Gastrocnemius medialis (tissue), 4 donors: ENCODE measurements at regions of chr17 and their contacts with region 1.

Region 1: GRCh38 chr17:48724251-48725003 is 1.4 kb downstream of the PRAC2 start:
- DNase-seq: peak; percentile 43 to 52
- ATAC-seq: peak; percentile 66 to 78
- H3K4me3 ChIP-seq: peak overlapping the region in 1 of 4 donors; percentile 13
- H3K27ac ChIP-seq: no peak overlapping the region
- H3K4me1 ChIP-seq: peaks cover 11 to 26% of the 10 kb centered on the region in 2 donors
- H3K27me3 ChIP-seq: peaks cover 99 to 100% (median 100%) of the 10 kb centered on the region in 3 donors
- CTCF ChIP-seq: peak; percentile 31 to 72 (median 44)
- POLR2A ChIP-seq: no peak

Region 2: DNA sequence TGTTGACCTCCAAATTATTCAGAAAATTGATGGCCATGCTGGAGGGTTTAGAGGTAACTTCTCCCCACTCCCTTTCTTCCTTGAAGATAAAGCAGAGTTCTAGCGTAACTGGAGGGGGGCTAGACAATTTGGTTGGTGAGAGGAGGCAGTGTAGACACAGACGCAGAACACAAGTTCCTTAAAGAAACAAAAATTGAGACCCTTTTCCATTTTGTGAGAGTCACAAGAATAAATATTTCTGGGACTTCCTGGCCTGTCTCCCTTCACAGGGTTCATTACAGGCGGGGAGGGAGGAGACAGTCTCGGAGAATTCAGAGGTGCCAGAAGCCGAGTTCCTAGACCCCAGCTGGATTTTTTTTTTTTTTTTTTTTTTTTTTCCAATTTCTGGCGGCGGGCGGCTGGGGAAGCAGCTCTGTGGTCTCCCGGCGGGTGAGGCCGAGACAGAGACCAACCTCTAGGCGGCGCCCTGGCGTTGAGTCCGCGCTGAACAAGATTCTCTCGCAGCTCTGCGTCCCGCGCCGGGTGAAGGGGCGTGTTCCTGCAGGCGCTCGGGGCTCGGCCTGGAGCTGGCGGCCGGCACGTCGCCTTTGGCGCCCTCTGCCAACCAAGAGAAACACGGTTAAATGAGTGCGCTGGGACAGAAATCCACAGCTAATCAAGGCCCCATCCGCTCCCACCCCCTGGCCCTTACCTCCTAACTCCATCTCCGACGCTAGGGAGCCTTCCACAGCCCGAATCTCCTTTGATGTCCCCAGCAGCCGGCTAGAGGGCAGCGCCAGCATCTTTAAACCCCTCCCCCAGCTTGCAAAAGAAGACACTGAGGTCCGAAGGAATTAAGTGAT is 88.0 kb before region 1 on chr17:
- in situ Hi-C with region 1: loop called in 1 of 4 experiments (anchors 25 kb)
- intact Hi-C with region 1: no loop called
- DNase-seq: peak in 1 of 2 donors; percentile 14
- ATAC-seq: peak in 1 of 2 donors; percentile 27
- H3K4me3 ChIP-seq: no peak overlapping the region
- H3K27ac ChIP-seq: no peak overlapping the region
- H3K4me1 ChIP-seq: no peaks in the 10 kb centered on the region
- H3K27me3 ChIP-seq: peaks cover 91 to 100% (median 100%) of the 10 kb centered on the region in 3 donors
- CTCF ChIP-seq: peak in 3 of 5 experiments; percentile 11 to 51 (median 39)
- POLR2A ChIP-seq: no peak

Region 3: GRCh38 chr17:48791128-48792032 is 67.0 kb after region 1 on chr17:
- in situ Hi-C with region 1: no loop called
- intact Hi-C with region 1: loop called (anchors 2 kb)
- DNase-seq: peak; percentile 25 to 36
- ATAC-seq: peak in 1 of 2 donors; percentile 54
- H3K4me3 ChIP-seq: no peak overlapping the region
- H3K27ac ChIP-seq: no peak overlapping the region
- H3K4me1 ChIP-seq: no peaks in the 10 kb centered on the region
- H3K27me3 ChIP-seq: peaks cover 0 to 18% (median 5%) of the 10 kb centered on the region in 3 donors
- CTCF ChIP-seq: peak; percentile 27 to 55 (median 46)
- POLR2A ChIP-seq: no peak

Region 4: DNA sequence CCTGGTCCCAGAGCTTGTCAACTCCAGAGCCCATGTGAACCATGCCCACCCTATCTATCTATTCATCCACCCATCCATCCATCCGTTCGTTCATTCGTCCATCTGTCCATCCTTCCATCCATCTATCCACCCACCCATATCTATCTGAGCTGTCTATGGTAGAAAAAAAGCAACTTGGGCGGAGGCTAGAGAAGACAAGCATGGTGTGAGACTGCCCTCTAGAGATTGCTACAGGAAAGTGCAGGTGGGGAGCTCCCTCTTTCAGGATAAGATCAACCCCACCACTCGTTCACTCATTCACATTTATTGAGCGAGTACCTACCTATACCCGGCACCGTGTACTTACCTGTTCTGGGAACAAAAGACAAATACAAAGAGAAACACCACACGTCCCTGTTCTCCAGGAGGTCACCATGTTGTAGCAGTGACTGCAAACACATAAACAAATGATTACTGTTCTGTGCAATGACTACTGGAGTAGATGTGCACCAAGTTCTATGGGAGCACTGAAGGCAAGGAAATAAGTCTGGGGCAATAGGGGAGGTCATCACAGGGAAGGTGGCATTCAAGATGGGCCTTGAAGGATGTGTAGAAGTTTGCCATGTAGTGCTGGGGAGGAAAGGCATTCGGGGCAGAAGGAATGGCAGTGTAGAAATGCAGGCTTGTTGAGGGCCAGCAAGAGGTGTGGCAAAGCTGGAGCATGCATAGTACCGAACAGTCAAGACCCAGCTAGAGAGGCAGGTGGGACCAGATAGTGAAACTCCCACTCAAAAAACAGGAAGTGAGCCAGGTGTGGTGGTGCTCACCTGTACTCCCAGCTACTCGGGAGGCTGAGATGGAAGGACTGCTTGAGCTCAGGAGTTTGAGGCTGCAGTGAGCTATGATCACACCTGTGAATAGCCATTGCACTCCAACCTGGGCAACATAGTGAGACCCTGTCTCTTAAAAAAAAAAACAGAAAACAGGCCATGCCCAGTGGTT is 154.8 kb after region 1 on chr17:
- in situ Hi-C with region 1: loop called in 2 of 4 experiments (anchors 10 kb)
- intact Hi-C with region 1: loop called (anchors 2 kb)
- DNase-seq: peak in 1 of 2 donors; percentile 38
- ATAC-seq: peak; percentile 76 to 85
- H3K4me3 ChIP-seq: no peak overlapping the region
- H3K27ac ChIP-seq: no peak overlapping the region
- H3K4me1 ChIP-seq: peaks cover 0 to 3% of the 10 kb centered on the region in 2 donors
- H3K27me3 ChIP-seq: no peaks in the 10 kb centered on the region
- CTCF ChIP-seq: peak; percentile 77 to 91 (median 87)
- POLR2A ChIP-seq: no peak

Region 5: DNA sequence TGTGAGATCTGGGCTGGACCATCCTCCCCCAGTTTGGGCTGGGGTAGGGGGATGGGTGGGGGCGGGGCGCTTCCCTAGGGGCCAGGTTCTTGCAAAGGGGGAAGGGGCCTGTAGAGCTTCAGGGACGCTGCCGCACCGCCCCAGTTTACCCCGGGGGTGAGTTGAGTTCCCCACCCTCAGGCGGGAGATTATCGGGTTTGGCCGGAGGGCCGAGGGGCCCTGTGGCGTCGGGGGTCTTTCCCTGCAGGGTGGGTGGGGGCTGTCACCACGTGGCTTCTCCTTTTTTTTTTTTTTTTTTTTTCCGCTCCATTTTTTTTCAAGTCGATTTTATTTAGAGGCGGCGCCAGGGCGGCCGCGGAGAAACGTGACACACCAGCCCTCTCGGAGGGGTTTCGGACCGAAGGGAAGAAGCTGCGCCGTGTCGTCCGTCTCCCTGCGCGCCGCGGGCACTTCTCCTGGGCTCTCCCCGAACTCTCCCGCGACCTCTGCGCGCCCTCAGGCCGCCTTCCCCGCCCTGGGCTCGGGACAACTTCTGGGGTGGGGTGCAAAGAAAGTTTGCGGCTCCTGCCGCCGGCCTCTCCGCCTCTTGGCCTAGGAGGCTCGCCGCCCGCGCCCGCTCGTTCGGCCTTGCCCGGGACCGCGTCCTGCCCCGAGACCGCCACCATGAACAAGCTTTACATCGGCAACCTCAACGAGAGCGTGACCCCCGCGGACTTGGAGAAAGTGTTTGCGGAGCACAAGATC is 272.8 kb after region 1 on chr17 and contains the start of gene IGF2BP1:
- in situ Hi-C with region 1: loop called in 2 of 4 experiments (anchors 25 kb)
- intact Hi-C with region 1: no loop called
- DNase-seq: no peak
- ATAC-seq: no peak
- H3K4me3 ChIP-seq: peak within 1 kb of the TSS; percentile 15 to 45 (median 24)
- H3K27ac ChIP-seq: no peak within 1 kb of the TSS
- H3K4me1 ChIP-seq: peaks cover 6 to 21% of the 10 kb centered on the region in 2 donors
- H3K27me3 ChIP-seq: peaks cover 97 to 100% (median 99%) of the 10 kb centered on the region in 3 donors
- CTCF ChIP-seq: no peak
- POLR2A ChIP-seq: no peak
- total RNA-seq, gene IGF2BP1: not detected

Region 6: DNA sequence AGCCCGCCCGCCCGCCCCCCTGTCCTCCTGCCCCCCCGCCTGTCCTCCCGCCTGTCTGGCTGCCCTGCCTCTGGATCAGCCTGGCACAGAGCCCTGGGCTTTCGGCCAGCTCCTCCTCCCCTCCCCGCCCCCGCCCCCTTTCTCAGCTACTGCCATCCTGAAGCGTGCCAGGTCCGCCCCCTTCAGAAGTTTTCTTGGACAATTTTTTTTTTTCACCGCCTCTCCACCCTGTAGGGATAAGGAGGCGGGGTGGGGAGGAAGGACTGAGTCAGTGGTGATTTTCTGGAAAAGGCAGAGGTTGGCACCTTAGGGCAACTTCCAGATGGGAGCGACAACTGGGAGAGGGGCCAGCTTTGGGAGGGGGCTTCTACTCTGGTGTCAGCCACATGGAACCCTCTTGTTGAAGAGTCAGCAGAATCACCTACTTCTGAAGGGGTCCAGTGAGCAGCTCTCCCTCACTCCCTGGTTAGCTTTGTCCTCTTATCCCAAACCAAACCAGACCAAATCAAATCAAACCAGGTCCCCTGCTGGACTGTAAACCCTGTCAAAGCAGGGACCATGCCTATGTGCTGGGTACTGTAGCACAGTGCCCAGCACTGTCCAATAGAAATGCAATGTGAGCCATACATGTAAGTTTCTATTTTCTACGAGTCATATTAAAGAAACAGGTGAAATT is 292.5 kb after region 1 on chr17:
- in situ Hi-C with region 1: loop called in 1 of 4 experiments (anchors 25 kb)
- intact Hi-C with region 1: no loop called
- DNase-seq: no peak
- ATAC-seq: no peak
- H3K4me3 ChIP-seq: no peak overlapping the region
- H3K27ac ChIP-seq: no peak overlapping the region
- H3K4me1 ChIP-seq: peaks cover 0 to 6% of the 10 kb centered on the region in 2 donors
- H3K27me3 ChIP-seq: peaks cover 59 to 72% (median 68%) of the 10 kb centered on the region in 3 donors
- CTCF ChIP-seq: no peak
- POLR2A ChIP-seq: no peak

Region 7: GRCh38 chr17:49031965-49032928 is 307.8 kb after region 1 on chr17:
- in situ Hi-C with region 1: loop called in 1 of 4 experiments (anchors 25 kb)
- intact Hi-C with region 1: no loop called
- DNase-seq: peak in 1 of 2 donors; percentile 14
- ATAC-seq: peak; percentile 56 to 79
- H3K4me3 ChIP-seq: no peak overlapping the region
- H3K27ac ChIP-seq: no peak overlapping the region
- H3K4me1 ChIP-seq: no peaks in the 10 kb centered on the region
- H3K27me3 ChIP-seq: peaks cover 4 to 15% (median 6%) of the 10 kb centered on the region in 3 donors
- CTCF ChIP-seq: peak; percentile 40 to 77 (median 55)
- POLR2A ChIP-seq: no peak